ENCODE measurements at regions of chr2 and their contacts with region 1.

Region 1: GRCh38 chr2:175167792-175168563 is at the start of gene ATF2:
- DNase-seq: peak; percentile 99
- H3K4me3 ChIP-seq: peak within 1 kb of the TSS; percentile 99
- H3K27ac ChIP-seq: peak within 1 kb of the TSS; percentile 68
- H3K4me1 ChIP-seq: peaks cover 26% of the 10 kb centered on the region
- CTCF ChIP-seq: no peak
- total RNA-seq, gene ATF2: 22.3 and 22.7 TPM in 2 replicates

Region 2: DNA sequence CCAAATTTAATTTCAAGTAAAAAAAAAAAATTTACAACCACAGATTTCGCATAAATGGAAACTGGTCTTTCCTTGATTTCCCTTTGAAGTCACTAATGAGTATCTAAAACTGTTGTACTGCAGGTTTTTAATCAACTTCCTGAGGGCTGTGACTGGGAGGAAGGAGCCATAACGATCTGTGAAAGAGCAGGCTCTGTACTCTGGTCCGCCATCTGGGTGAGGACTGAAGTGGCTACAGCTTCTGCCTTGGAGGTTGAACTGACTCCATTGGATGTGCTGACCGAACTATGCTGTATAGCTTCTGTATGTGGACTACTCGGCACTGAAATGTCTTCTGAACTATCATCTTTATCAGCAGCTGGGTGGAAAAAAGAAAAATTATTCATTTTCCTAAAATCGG is 93.5 kb before region 1 on chr2:
- CTCF ChIA-PET with region 1: no interaction called
- POLR2A ChIA-PET with region 1: no interaction called
- intact Hi-C with region 1: no loop called
- DNase-seq: no peak
- H3K4me3 ChIP-seq: no peak overlapping the region
- H3K27ac ChIP-seq: no peak overlapping the region
- H3K4me1 ChIP-seq: no peaks in the 10 kb centered on the region
- CTCF ChIP-seq: no peak

Region 3: GRCh38 chr2:175111200-175111657 is 56.7 kb before region 1 on chr2:
- CTCF ChIA-PET with region 1: no interaction called
- POLR2A ChIA-PET with region 1: no interaction called
- intact Hi-C with region 1: loop called (anchors 5 kb)
- DNase-seq: peak; percentile 57
- H3K4me3 ChIP-seq: no peak overlapping the region
- H3K27ac ChIP-seq: no peak overlapping the region
- H3K4me1 ChIP-seq: no peaks in the 10 kb centered on the region
- CTCF ChIP-seq: peak; percentile 88

Region 4: GRCh38 chr2:175154661-175155082 is 13.3 kb before region 1 on chr2:
- CTCF ChIA-PET with region 1: no interaction called
- POLR2A ChIA-PET with region 1: interaction called, 11 read pairs
- intact Hi-C with region 1: no loop called
- DNase-seq: no peak
- H3K4me3 ChIP-seq: no peak overlapping the region
- H3K27ac ChIP-seq: no peak overlapping the region
- H3K4me1 ChIP-seq: no peaks in the 10 kb centered on the region
- CTCF ChIP-seq: no peak

Region 5: DNA sequence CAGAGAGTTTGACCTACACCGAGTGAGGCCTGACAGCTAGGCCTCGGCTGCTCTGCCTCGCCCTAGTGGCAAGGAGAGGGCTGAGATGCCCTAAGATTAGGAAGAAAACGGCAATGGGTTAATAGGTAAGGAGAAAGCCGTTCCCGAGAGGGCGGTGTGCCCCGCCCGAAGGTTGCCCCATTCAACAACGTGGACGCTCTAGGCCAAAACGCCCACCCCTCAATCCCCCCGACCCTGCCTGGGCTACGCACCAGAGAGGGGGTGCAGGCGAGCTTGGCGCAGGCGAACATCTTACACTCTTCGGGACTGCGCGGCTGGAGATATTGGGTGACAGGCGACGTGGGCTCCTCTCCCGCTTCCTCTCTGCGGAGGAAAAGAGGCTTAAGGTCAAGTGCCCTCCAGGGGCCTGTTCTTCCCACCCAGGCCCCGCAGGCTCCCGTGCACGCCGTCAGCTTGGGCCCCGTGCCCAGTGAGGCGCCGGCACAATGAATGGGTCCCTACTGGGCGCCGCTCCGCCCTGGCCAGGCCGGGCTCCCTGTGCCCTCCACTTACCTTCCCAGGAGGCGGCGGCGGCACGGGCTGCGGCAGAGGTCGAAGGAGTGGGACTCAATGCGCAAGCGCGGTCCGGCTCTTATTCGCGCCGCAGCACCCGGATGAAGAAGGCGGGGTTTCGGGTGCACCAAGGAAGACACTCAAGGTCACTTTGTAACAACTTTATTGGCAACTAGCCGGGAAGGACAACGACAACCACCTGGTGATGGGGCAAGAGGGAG is 13.3 kb after region 1 on chr2 and contains the start of gene ATP5MC3:
- CTCF ChIA-PET with region 1: interaction called, 5 read pairs
- POLR2A ChIA-PET with region 1: interaction called, 38 read pairs
- intact Hi-C with region 1: loop called (anchors 1 kb)
- DNase-seq: peak; percentile 97
- H3K4me3 ChIP-seq: peak within 1 kb of the TSS; percentile 85
- H3K27ac ChIP-seq: peak within 1 kb of the TSS; percentile 67
- H3K4me1 ChIP-seq: peaks cover 31% of the 10 kb centered on the region
- CTCF ChIP-seq: peak; percentile 42; the same call in 1 of the 2 replicates
- total RNA-seq, gene ATP5MC3: 149 and 161 TPM in 2 replicates

Region 6: DNA sequence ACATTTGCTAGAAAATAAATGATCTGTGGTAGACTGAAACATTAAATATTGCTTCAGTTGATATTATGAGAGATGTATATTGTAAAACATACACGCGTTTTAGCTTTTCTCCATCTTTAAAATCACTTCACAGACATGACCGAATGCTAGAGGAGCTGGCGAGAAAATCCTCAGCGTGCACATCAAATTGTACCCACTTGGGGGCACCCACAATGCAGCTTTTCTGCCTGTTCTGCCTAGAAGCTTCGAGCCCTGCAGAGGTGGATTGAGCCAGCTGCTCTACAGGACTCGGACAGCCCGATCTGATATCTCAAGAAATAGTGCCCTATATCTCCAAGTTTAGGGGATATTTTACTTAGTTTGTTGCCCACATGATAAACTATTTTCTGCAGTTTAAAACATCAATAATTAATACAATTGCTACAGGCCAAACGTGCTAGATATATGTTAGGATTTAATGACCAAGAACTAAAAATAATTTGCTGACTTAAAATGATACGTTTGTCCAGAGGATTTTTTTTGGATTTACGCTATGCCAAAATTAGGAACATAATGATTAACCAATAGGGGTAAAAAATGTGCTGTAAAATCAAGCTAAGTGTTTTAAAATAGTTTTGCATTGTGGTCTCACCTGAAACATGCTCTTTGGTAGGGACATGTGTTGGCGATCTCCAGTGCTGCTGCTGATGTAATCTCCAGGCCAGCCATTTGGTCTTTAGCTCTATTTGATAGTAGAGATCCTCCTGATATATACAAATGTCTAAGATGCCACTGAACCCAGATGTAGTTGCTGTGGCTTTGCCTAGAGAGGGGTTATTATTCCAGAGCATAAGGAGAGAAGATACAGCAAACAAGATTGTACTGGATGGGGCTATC is 35.9 kb after region 1 on chr2:
- CTCF ChIA-PET with region 1: no interaction called
- POLR2A ChIA-PET with region 1: no interaction called
- intact Hi-C with region 1: no loop called
- DNase-seq: peak; percentile 55
- H3K4me3 ChIP-seq: no peak overlapping the region
- H3K27ac ChIP-seq: no peak overlapping the region
- H3K4me1 ChIP-seq: no peaks in the 10 kb centered on the region
- CTCF ChIP-seq: peak; percentile 79

Region 7: DNA sequence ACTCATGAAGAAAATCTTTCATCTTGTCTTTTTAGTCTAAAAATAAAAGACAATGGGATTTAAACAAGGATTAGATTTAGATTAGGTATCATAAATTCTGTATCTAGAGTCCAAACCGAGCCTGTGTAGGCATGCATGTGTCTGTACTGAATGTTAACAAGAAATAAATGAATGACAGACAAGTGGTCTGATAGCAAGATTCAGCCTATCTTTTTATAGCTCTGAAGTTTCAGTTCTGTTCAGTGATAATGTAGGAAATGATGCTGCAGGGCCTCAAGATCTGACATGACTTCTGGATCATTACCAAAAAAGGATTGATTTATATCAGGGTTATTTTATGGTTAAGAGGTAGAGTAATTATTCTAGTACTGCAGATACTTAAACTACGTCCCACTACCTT is 150.6 kb after region 1 on chr2:
- CTCF ChIA-PET with region 1: no interaction called
- POLR2A ChIA-PET with region 1: interaction called, 11 read pairs
- intact Hi-C with region 1: no loop called
- DNase-seq: no peak
- H3K4me3 ChIP-seq: no peak overlapping the region
- H3K27ac ChIP-seq: no peak overlapping the region
- H3K4me1 ChIP-seq: no peaks in the 10 kb centered on the region
- CTCF ChIP-seq: no peak

Region 8: DNA sequence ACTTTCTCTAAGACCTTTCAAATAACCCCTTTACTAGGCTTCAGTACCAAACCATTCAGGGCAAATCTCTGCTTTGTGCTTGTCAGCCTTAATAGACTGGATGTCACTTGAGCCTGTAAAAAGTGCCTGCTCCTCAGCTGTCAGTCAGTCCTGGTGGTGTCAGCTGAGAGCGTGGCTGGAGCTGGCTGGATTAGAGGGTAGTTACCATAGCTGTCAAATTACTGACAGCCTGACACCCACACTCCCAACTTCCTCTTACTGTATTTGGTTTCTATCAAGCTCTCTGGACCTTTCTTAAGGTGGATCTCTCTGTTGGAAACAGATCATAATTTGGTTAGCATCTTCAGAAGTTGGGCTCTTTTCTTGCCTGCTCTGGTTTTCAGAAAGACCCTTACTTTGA is 384.9 kb after region 1 on chr2:
- CTCF ChIA-PET with region 1: no interaction called
- POLR2A ChIA-PET with region 1: no interaction called
- intact Hi-C with region 1: no loop called
- DNase-seq: no peak
- H3K4me3 ChIP-seq: no peak overlapping the region
- H3K27ac ChIP-seq: no peak overlapping the region
- H3K4me1 ChIP-seq: no peaks in the 10 kb centered on the region
- CTCF ChIP-seq: no peak

Measured in OCI-LY7 (cell line).